H1 (cell line): ENCODE measurements at regions of chr3 and their contacts with region 1.

Region 1: DNA sequence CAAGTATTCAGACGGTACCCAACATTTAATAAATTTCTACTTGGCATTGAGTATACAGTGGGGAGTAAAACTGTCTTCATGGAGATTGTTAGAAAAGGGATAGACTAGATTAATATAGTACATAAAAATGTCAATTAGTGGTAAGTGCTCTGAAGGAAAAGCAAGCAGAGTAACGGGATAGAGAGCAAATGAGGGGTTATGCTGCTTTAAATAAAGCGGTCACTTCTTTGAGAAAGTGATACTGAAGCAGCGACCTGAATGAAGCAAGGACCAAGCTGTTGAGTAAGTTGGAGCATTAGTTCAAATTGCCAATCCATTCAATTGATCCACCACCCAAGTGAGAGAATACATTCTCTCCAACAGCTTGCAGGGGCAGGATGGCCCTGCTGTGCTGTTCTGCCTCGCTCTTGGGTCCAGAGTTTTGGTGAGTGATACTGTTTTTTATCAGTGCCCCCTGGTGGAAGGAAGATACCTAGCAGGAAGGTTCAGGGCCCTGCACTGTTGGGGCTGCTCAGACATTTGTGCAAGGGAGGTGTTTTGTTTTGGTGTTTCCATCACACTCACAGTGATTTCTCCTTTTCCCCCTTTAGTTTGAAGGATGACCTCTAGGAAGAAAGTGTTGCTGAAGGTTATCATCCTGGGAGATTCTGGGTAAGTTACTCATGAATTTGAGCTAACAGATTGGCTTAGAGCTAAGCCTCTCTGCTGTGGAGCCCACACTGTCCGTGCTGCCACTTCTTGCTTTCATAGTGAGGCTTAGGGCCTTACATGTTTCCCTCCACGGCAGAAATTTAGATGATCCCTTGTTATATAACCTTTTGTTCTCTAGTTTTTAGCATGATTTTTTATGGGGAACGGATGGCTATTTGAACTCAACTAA is 69.0 kb downstream of the RAB7A start:
- DNase-seq: peak; percentile 17 to 72
- H3K4me3 ChIP-seq: no peak overlapping the region
- H3K27ac ChIP-seq: no peak overlapping the region
- H3K4me1 ChIP-seq: peaks cover 0 to 1% (median 0%) of the 10 kb centered on the region in 4 experiments; a peak in 2 of 7 replicates
- H3K27me3 ChIP-seq: no peaks in the 10 kb centered on the region
- CTCF ChIP-seq: peak; percentile 61 to 91 (median 77)
- EP300 ChIP-seq: no peak
- POLR2A ChIP-seq: no peak
- RAD21 ChIP-seq: peak; percentile 78 to 84

Region 2: GRCh38 chr3:128567705-128568356 is 227.2 kb before region 1 on chr3:
- CTCF ChIA-PET with region 1: no interaction called
- POLR2A ChIA-PET with region 1: no interaction called
- DNase-seq: no peak
- H3K4me3 ChIP-seq: no peak overlapping the region; a peak in 1 of 8 replicates
- H3K27ac ChIP-seq: peak overlapping the region; percentile 52; the same call in 1 of the 2 replicates
- H3K4me1 ChIP-seq: peaks cover 6 to 10% (median 8%) of the 10 kb centered on the region in 4 experiments; a peak in 6 of 7 replicates
- H3K27me3 ChIP-seq: no peaks in the 10 kb centered on the region; a peak in 1 of 7 replicates
- CTCF ChIP-seq: peak in 1 of 3 experiments; percentile 34; a peak in 1 of 4 replicates
- EP300 ChIP-seq: no peak
- POLR2A ChIP-seq: no peak
- RAD21 ChIP-seq: no peak

Region 3: GRCh38 chr3:128689060-128689459 is 106.0 kb before region 1 on chr3:
- CTCF ChIA-PET with region 1: interaction called, 17 read pairs
- POLR2A ChIA-PET with region 1: no interaction called
- DNase-seq: no peak
- H3K4me3 ChIP-seq: no peak overlapping the region
- H3K27ac ChIP-seq: no peak overlapping the region
- H3K4me1 ChIP-seq: no peaks in the 10 kb centered on the region
- H3K27me3 ChIP-seq: no peaks in the 10 kb centered on the region
- CTCF ChIP-seq: no peak
- EP300 ChIP-seq: no peak
- POLR2A ChIP-seq: no peak
- RAD21 ChIP-seq: no peak

Region 4: DNA sequence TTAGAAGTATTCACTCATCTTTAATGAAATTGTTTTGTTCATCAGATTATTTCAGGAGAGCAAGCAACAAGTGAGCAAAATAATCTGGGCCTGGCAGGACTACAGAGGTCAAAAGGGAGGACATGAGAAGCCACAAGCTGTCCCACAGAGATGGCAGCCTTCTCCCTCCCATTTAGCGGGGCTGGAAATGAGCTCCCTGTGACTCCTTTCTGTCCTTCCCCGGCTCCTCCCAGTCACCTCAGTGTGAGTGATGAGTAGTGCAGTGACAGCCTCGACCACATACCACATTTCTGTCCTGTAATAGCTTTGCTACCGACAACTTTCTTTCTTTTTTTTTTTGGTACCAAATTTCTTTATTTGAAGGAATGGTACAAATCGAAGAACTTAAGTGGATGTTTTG is 31.0 kb before region 1 on chr3:
- CTCF ChIA-PET with region 1: interaction called, 13 read pairs
- POLR2A ChIA-PET with region 1: interaction called, 3 read pairs
- DNase-seq: no peak
- H3K4me3 ChIP-seq: no peak overlapping the region
- H3K27ac ChIP-seq: no peak overlapping the region
- H3K4me1 ChIP-seq: peaks cover 0 to 2% (median 0%) of the 10 kb centered on the region in 4 experiments; a peak in 3 of 7 replicates
- H3K27me3 ChIP-seq: no peaks in the 10 kb centered on the region
- CTCF ChIP-seq: no peak
- EP300 ChIP-seq: no peak
- POLR2A ChIP-seq: no peak
- RAD21 ChIP-seq: no peak

Region 5: GRCh38 chr3:128780101-128780837 is 14.7 kb before region 1 on chr3:
- CTCF ChIA-PET with region 1: interaction called, 42 read pairs
- POLR2A ChIA-PET with region 1: interaction called, 3 read pairs
- DNase-seq: no peak
- H3K4me3 ChIP-seq: no peak overlapping the region
- H3K27ac ChIP-seq: no peak overlapping the region
- H3K4me1 ChIP-seq: peaks cover 2 to 13% (median 8%) of the 10 kb centered on the region in 4 experiments; a peak in 5 of 7 replicates
- H3K27me3 ChIP-seq: no peaks in the 10 kb centered on the region
- CTCF ChIP-seq: no peak
- EP300 ChIP-seq: no peak
- POLR2A ChIP-seq: no peak
- RAD21 ChIP-seq: no peak

Region 6: GRCh38 chr3:128805772-128806171 is 10.8 kb after region 1 on chr3:
- CTCF ChIA-PET with region 1: interaction called, 28 read pairs
- POLR2A ChIA-PET with region 1: no interaction called
- DNase-seq: no peak
- H3K4me3 ChIP-seq: no peak overlapping the region
- H3K27ac ChIP-seq: no peak overlapping the region
- H3K4me1 ChIP-seq: peaks cover 0 to 2% (median 0%) of the 10 kb centered on the region in 4 experiments; a peak in 3 of 7 replicates
- H3K27me3 ChIP-seq: no peaks in the 10 kb centered on the region
- CTCF ChIP-seq: no peak
- EP300 ChIP-seq: no peak
- POLR2A ChIP-seq: no peak
- RAD21 ChIP-seq: no peak

Region 7: DNA sequence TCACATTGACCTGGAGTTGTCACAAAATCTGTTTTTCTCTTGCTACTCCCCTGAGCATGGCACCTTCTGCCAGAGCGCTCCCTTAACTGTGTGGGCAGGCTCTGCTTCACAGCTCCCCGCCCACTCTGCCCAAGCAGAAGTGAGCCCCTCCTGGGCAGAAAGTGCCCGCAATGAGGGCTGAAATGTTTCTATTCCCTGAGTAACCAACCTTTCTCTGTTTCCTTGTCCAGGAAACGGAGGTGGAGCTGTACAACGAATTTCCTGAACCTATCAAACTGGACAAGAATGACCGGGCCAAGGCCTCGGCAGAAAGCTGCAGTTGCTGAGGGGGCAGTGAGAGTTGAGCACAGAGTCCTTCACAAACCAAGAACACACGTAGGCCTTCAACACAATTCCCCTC is 18.1 kb after region 1 on chr3:
- CTCF ChIA-PET with region 1: interaction called, 16 read pairs
- POLR2A ChIA-PET with region 1: no interaction called
- DNase-seq: no peak
- H3K4me3 ChIP-seq: no peak overlapping the region
- H3K27ac ChIP-seq: no peak overlapping the region
- H3K4me1 ChIP-seq: no peaks in the 10 kb centered on the region
- H3K27me3 ChIP-seq: no peaks in the 10 kb centered on the region; a peak in 1 of 7 replicates
- CTCF ChIP-seq: no peak
- EP300 ChIP-seq: no peak
- POLR2A ChIP-seq: no peak
- RAD21 ChIP-seq: no peak